ENCODE measurements at regions of chr15 and their contacts with region 1.

Region 1: DNA sequence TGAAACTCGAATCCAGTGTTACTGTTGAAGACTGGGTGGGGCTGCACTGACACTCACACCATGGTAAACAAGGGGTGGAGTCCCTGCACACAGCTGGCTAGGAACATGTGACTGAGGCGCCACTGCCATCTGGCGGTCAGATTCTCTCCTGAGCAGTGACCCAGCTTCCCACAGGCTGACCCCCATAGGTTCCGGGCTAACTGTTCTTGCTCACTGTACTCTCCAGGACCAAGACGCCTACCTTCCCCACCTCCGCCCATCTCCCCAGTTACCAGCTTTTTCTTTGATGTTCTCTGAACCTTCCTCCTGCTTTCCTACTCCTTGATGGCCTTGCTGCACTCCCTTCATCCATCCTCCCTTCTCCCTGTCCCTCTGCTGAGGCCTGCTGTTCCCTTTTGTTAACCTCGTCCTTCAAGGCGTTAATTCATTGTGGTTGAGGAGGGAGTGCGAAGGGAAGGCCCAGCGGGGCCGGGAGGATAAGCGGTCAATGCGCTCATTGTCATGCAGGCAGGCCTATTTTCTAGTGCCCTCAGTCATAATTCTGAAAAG is 115.2 kb downstream of the ATP8B4 start:
- DNase-seq: peak; percentile 47
- CTCF ChIP-seq: peak; percentile 57

Region 2: GRCh38 chr15:49235446-49236124 is 768.3 kb before region 1 on chr15:
- in situ Hi-C with region 1: loop called (anchors 25 kb)
- DNase-seq: peak; percentile 44
- CTCF ChIP-seq: peak; percentile 44

Region 3: DNA sequence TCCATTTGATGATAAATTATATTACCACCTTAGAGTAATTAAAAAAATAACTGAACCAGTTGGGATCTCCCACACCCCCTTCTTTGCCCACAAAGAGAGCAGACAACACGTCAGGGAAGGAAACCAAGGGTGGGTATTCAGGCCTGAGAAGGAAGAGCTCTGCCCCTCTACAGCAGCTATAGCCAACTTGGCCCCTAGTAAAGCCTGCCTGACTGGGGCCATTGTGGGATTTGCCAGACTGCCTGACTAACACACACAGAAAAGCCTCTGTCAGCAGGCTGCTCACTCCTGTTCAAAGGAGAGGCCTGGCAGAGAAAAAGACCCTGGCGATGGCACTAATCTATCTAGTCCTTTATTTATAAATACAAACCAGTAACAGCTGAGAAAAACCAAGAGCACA is 73.8 kb after region 1 on chr15:
- in situ Hi-C with region 1: no loop called
- DNase-seq: no peak
- CTCF ChIP-seq: no peak